Activated T-helper 1 cell treated with anti-CD3 and anti-CD28 coated beads, Interleukin-12 subunit alpha, Interleukin-12 subunit beta, Interleukin-2, Interleukin-4 antibody, amounts not matched to agents 30 ng/mL and 10 ng/mL and 1 ng/mL, durations not matched to agents 14 hours and 24 hours and 36 hours (primary cell): ENCODE measurements at regions of chr17 and their contacts with region 1.

Region 1: DNA sequence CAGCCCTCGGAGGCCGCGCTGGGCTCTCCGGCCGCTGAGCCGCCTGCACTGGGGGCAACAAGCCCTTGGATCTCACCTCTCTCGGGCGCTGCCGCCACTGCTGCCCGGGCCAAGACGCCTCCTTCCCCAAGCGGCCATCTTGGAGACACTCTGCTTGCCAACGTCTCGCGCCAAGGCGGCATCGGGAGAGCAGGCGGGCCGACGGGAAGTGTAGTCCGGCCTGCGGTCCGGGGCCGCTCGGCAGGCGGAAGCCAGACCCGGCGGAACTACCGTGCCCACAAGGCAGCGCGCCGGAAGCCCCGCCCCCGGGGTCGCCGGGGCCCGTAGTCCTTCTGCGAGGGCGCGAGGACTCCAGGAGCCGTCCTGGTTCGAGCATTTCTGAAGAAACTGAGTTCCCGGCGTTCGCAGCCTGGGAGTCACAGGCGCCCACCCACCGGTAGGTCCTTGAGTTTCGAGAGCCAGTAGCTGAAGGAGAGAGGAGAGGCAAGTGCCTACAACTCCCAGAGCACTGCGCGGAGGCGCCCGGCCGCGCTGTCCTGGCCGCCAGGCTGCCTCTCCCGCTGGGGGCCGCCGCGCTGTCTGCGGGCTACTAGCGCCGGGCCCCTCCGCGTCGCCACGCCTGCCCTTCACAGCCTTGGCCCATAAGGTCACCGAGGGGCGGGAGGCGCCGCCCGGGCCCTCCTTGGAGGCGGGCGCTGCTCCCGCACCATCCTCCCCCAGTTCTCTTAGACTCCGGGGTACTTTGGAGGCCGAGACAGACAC is at the start of gene TMEM11:
- DNase-seq: peak; percentile 95
- H3K4me3 Mint-ChIP-seq: peak within 1 kb of the TSS; percentile 97
- H3K27ac Mint-ChIP-seq: peak within 1 kb of the TSS; percentile 91
- H3K4me1 Mint-ChIP-seq: peaks cover 55% of the 10 kb centered on the region
- H3K27me3 Mint-ChIP-seq: no peaks in the 10 kb centered on the region
- total RNA-seq, gene TMEM11: 33.5 and 35.6 TPM in 2 replicates

Region 2: DNA sequence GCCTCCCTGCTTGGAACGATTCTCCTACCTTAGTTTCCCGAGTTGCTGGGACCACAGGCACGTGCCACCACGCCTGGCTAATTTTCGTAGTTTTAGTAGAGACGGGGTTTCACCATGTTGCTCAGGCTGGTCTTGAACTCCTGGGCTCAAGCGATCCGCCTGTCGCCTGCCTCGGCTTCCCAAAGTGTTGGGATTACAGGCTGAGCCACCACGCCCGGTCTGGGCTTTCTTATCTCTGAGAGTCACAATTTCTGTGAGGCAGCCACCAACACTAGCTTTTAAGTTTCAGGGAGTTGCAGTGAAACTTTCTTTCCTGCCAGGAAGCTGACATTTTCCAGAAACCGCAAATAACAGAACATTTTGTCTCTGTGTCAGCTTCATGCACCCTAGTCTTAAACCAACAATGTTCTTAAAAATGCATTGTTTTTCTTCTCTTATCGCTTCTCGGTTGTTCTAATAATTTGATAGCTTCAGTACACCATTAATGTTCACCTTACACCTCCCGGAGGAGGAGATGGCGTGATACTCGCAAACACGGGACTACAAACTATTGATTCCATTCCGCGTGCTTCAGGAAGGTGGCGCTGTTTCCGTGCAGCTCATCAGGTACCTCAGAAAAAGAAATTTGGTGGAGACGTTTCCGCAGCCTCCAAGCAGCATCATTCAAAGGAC is 94.8 kb before region 1 on chr17:
- intact Hi-C with region 1: loop called (anchors 1 kb)
- DNase-seq: peak; percentile 53
- H3K4me3 Mint-ChIP-seq: no peak overlapping the region
- H3K27ac Mint-ChIP-seq: no peak overlapping the region
- H3K4me1 Mint-ChIP-seq: peaks cover 12% of the 10 kb centered on the region
- H3K27me3 Mint-ChIP-seq: peaks cover 12% of the 10 kb centered on the region

Region 3: GRCh38 chr17:21199299-21199698 is 14.9 kb before region 1 on chr17:
- intact Hi-C with region 1: no loop called
- DNase-seq: no peak
- H3K4me3 Mint-ChIP-seq: no peak overlapping the region
- H3K27ac Mint-ChIP-seq: no peak overlapping the region
- H3K4me1 Mint-ChIP-seq: peaks cover 9% of the 10 kb centered on the region
- H3K27me3 Mint-ChIP-seq: no peaks in the 10 kb centered on the region

Region 4: DNA sequence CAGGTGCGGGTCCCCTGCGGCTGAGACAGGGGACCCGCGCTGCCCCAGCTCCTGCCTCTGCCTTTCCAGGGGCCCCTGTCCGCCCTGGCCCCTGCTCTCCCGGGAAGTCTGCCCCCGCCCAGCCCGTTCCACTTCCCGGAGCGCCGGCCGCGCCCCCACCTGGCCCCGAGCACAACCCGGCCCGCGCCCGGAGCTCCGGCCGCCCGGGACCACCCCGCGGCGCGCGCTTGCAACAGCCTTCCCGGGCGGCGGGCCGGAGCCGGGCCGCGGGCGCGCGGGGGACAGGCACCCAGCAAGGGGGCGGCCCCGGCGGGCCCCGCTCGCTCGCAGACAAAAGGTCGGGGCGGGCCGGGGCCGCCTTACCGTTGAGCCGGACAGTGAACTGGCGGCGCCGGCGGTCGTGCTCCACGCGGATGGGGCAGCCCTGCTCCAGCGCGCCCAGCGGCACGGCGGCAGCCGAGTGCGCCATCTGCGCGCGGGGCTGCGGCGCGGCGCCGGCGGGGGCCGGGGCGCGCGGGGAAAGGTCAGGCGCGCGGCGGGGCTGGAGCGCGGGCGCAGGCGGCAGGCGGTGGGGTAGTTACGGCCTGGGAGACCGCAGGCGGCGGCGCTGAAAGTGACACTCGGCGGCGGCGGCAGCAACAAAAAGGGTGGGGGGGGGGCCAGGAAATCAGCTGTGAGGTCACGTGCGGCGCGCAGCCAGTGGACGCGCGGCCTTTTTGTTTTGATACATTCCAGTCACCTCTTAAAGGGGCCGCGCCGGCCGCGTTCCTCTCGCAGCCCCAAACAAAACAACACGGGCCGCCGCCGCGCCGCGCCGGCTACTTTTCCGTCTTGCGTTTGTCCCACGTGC is 38.8 kb after region 1 on chr17 and contains the start of gene NATD1:
- intact Hi-C with region 1: loop called (anchors 1 kb)
- DNase-seq: peak; percentile 70
- H3K4me3 Mint-ChIP-seq: peak within 1 kb of the TSS; percentile 83
- H3K27ac Mint-ChIP-seq: peak within 1 kb of the TSS; percentile 23
- H3K4me1 Mint-ChIP-seq: peaks cover 7% of the 10 kb centered on the region
- H3K27me3 Mint-ChIP-seq: peaks cover 13% of the 10 kb centered on the region
- total RNA-seq, gene NATD1: 1.6 and 1.7 TPM in 2 replicates

Region 5: GRCh38 chr17:21318439-21318838 is 104.2 kb after region 1 on chr17:
- intact Hi-C with region 1: loop called (anchors 5 kb)
- DNase-seq: no peak
- H3K4me3 Mint-ChIP-seq: no peak overlapping the region
- H3K27ac Mint-ChIP-seq: no peak overlapping the region
- H3K4me1 Mint-ChIP-seq: no peaks in the 10 kb centered on the region
- H3K27me3 Mint-ChIP-seq: peaks cover 3% of the 10 kb centered on the region

Region 6: DNA sequence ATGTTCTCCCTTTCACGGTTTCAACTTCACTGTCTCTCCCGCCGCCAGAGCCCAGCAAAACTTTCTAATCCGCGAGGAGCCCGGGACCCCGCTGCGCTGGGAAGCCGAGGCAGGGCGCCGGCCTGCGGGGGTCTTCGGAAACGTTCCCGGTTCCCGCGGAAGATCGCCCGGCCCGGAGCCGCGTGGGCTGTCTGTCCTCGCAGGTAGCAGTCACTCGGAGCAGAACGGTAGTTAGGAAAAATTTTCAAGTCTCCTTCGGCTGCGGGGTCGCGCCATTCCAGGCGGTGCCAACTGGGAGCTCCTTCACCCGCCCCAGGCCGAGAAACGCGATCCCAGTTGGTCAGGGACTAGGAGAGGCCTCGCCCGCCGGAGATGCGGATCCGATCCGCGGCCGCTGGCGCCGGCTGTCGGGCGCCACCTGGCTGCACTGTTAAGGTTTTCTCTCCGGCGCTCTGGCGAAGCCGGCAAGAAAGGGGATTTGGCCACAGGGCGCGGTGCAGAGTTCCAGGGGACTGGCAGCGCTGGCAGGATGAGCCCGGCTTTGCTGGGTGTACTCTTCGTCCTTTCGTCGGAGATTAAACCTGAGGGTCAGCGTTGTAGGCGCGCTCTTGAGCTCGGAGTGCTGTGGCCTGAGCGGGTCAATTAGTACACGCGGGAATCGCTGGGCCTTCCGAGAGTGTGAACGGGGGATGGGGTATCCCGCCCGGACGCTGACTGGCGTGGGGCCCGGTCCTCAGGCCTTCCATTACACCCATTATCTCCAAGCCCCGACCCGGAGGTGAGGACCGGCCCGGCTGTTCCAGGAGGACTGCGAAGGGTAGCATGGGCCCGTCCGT is 297.4 kb after region 1 on chr17:
- intact Hi-C with region 1: loop called (anchors 2 kb)
- DNase-seq: peak; percentile 37
- H3K4me3 Mint-ChIP-seq: peak overlapping the region; percentile 70
- H3K27ac Mint-ChIP-seq: no peak overlapping the region
- H3K4me1 Mint-ChIP-seq: peaks cover 18% of the 10 kb centered on the region
- H3K27me3 Mint-ChIP-seq: peaks cover 66% of the 10 kb centered on the region